ENCODE measurements at regions of chr11 and their contacts with region 1.

Region 1: DNA sequence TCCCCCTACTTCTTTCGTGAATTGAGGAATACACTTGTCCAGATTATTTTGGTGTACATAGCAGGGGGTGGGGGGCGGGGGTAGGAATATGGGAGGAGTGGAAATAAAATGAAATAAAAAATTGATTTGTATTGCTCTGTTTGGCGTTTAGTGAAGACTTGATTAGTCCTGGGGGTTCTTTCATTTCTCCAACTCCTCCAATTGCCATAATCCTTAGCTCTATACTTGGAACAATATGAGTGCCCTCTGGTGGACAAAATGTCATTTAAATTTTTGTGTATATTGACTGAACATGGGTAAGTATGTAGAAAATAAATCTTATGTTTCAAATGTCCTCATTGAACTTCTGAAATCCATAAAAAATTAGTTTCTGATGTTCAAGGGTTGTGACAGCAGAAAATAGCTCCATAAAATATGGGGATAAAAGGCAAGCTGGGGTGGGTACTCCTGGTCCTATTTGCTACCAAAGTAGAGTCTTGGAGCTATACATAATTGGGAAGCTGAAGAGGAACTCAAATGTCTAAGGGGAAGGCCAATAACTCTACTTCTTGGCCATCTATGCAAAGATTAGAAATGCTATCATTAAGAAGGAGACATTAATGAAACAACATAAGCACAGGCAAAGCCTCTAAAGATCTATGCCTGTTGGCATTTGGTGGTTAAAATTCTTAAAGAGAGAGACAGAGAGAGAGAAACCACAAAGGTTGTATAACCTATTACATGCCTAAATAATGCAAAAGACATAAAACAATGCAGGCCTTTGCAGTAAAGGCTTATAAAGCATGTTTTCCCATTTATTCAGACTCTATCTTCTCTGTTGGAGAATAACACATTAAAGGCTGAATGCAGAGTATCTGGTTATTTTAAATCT is 421.6 kb downstream of the METTL15 start:
- DNase-seq: no peak
- H3K4me3 ChIP-seq: no peak overlapping the region
- CTCF ChIP-seq: no peak

Region 2: DNA sequence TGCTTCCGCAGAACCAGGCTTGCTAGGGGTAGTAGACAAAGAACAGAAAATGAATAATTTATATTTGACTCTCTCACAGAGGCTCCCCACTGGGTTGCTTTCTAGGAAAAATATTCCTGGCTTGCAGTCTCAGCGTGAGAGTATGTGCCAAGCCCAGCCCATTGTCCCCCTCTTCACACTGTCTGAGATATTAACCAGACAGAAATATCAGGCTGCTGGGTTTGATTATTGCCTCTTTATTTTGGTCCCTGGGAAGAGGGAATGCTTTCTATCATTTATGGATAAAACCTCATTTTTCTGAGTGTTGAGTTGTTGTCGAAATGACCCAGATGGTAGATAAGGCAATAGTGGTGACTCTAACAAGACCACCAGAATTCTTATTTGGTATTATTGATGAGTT is 53.7 kb before region 1 on chr11:
- CTCF ChIA-PET with region 1: no interaction called
- POLR2A ChIA-PET with region 1: no interaction called
- DNase-seq: no peak
- H3K4me3 ChIP-seq: no peak overlapping the region
- CTCF ChIP-seq: no peak

Region 3: GRCh38 chr11:28542561-28542960 is 12.8 kb after region 1 on chr11:
- CTCF ChIA-PET with region 1: interaction called, 26 read pairs
- POLR2A ChIA-PET with region 1: no interaction called
- DNase-seq: no peak
- H3K4me3 ChIP-seq: no peak overlapping the region
- CTCF ChIP-seq: no peak

Region 4: GRCh38 chr11:28606930-28607329 is 77.2 kb after region 1 on chr11:
- CTCF ChIA-PET with region 1: no interaction called
- POLR2A ChIA-PET with region 1: no interaction called
- DNase-seq: no peak
- H3K4me3 ChIP-seq: no peak overlapping the region
- CTCF ChIP-seq: no peak